GM12878 (cell line): ENCODE measurements at regions of chr3 and their contacts with region 1.

Region 1: GRCh38 chr3:153026026-153026425 is 136.0 kb upstream of the RAP2B start:
- DNase-seq: no peak
- ATAC-seq: peak; percentile 50; the same call in 1 of the 3 replicates
- H3K4me3 ChIP-seq: no peak overlapping the region
- H3K27ac ChIP-seq: no peak overlapping the region
- H3K4me1 ChIP-seq: no peaks in the 10 kb centered on the region
- H3K27me3 ChIP-seq: no peaks in the 10 kb centered on the region
- CTCF ChIP-seq: peak; percentile 34 to 63 (median 49); a peak in 5 of 6 replicates
- EP300 ChIP-seq: no peak
- POLR2A ChIP-seq: no peak
- RAD21 ChIP-seq: peak; percentile 67

Region 2: DNA sequence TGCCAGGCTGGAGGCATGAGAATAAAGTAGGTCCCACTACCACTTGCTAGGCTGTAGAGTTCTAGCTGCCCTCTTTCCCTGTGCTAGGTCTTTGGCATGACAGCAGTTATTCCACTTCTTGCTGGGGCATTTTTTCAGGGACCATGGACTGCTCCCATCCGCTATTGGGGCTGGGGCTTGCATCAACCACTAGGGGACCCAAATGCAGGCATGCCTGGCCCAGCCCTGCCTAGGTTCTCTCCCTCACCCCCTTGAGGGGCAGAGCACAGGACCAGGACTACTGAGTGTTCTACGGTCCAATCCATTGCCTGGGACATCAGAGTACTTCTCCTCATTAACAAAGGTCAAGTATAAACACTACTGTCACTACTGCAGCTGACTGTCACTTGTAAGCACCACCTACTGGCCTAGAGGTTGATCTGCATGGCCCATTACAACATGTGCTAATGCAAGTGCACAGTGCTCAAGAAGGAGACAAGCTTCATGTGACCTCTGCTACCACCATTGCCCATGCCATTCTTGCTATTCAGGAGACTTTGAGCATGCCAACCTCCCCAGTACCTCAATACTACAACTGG is 486.7 kb before region 1 on chr3:
- CTCF ChIA-PET with region 1: no interaction called
- POLR2A ChIA-PET with region 1: no interaction called
- RAD21 ChIA-PET with region 1: no interaction called
- SMC1A ChIA-PET with region 1: no interaction called
- in situ Hi-C with region 1: no loop called
- intact Hi-C with region 1: no loop called
- DNase-seq: no peak
- ATAC-seq: peak; percentile 89
- H3K4me3 ChIP-seq: no peak overlapping the region
- H3K27ac ChIP-seq: no peak overlapping the region
- H3K4me1 ChIP-seq: no peaks in the 10 kb centered on the region
- H3K27me3 ChIP-seq: no peaks in the 10 kb centered on the region
- CTCF ChIP-seq: peak in 1 of 3 experiments; percentile 27; a peak in 2 of 6 replicates
- EP300 ChIP-seq: no peak
- POLR2A ChIP-seq: no peak
- RAD21 ChIP-seq: no peak

Region 3: GRCh38 chr3:153052096-153052460 is 26.1 kb after region 1 on chr3:
- CTCF ChIA-PET with region 1: no interaction called
- POLR2A ChIA-PET with region 1: no interaction called
- RAD21 ChIA-PET with region 1: no interaction called
- SMC1A ChIA-PET with region 1: no interaction called
- in situ Hi-C with region 1: no loop called
- intact Hi-C with region 1: no loop called
- DNase-seq: no peak
- ATAC-seq: no peak
- H3K4me3 ChIP-seq: no peak overlapping the region
- H3K27ac ChIP-seq: no peak overlapping the region
- H3K4me1 ChIP-seq: no peaks in the 10 kb centered on the region
- H3K27me3 ChIP-seq: no peaks in the 10 kb centered on the region
- CTCF ChIP-seq: no peak
- EP300 ChIP-seq: no peak
- POLR2A ChIP-seq: no peak
- RAD21 ChIP-seq: no peak

Region 4: DNA sequence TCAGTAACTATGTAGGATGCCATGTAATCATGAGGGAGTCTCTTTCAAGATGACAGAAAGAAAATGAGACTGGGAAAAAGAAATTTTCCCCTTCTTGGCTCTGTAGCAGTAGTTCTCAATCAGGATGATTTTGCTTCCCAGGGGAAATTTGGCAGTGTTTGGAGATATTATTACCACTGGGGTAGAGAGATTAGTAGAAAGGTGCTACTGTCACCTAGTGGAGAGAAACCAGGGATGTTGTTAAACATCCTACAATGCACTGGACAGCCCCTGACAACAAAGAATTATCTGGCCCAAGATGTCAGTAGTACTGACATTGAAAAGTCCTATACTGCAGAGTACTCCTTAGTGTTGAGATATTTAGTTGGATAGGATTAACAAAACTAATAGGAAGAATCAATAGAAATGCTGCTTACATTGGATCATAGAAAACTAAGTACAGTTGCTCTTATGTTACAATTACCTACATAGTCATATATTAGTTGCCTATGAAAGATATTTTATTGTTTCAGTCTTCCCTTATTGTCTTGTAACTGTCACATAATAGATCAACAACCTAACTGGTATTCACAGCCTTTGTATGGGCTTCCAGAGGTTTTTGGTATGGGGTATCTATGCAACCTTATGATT is 569.3 kb after region 1 on chr3:
- CTCF ChIA-PET with region 1: no interaction called
- POLR2A ChIA-PET with region 1: no interaction called
- RAD21 ChIA-PET with region 1: no interaction called
- SMC1A ChIA-PET with region 1: interaction called, 5 read pairs
- in situ Hi-C with region 1: no loop called
- intact Hi-C with region 1: loop called (anchors 5 kb)
- DNase-seq: no peak
- ATAC-seq: peak; percentile 75
- H3K4me3 ChIP-seq: no peak overlapping the region
- H3K27ac ChIP-seq: no peak overlapping the region
- H3K4me1 ChIP-seq: no peaks in the 10 kb centered on the region
- H3K27me3 ChIP-seq: no peaks in the 10 kb centered on the region
- CTCF ChIP-seq: peak; percentile 50 to 65 (median 54)
- EP300 ChIP-seq: no peak
- POLR2A ChIP-seq: no peak
- RAD21 ChIP-seq: peak; percentile 75

Region 5: DNA sequence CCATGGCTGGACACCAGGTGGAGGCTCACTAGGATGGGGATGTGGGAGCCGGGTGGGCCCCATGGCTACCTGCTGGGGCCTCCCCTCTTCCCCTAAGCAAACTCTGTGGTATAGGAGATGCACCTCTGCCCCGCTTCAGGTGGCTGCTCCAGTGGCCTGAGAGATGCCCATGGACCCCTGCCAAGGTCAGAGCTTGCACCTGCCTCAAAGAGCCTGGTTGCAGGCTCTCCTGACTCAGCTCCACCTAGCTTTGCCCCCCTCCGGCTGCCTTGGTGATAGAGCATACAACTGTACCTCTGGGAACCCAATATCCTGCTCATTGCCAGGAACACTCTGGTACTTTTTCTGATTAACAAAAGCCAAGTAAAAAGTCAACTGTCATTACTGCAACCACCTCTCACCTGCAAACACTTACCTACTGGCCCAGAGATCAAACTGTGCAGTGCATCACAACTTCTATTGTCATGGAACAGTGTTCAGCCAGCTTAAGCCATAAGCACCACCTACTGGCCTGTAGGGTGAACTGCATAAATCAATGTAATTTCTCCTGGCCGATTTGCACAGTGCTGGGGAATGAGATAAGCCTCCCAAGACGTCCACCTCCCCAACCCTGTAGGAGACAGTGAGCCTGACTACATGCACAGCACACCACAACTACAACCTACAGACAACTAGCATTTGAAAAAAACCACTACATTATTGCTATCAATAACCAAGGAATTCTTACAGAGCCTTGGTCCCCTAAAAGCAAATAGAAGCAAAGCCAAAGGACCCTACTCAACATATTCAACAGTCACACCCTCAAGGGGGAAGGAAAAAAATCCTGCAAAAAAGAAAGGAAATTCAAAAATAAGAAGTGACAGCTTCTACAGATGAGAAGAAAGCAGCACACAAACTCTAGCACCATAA is 742.8 kb after region 1 on chr3:
- CTCF ChIA-PET with region 1: interaction called, 3 read pairs
- POLR2A ChIA-PET with region 1: no interaction called
- RAD21 ChIA-PET with region 1: interaction called, 3 read pairs
- SMC1A ChIA-PET with region 1: interaction called, 3 read pairs
- in situ Hi-C with region 1: loop called (anchors 10 kb)
- intact Hi-C with region 1: loop called (anchors 1 kb)
- DNase-seq: peak; percentile 9
- ATAC-seq: peak; percentile 98
- H3K4me3 ChIP-seq: no peak overlapping the region
- H3K27ac ChIP-seq: no peak overlapping the region
- H3K4me1 ChIP-seq: no peaks in the 10 kb centered on the region
- H3K27me3 ChIP-seq: no peaks in the 10 kb centered on the region
- CTCF ChIP-seq: peak; percentile 77 to 82 (median 79)
- EP300 ChIP-seq: no peak
- POLR2A ChIP-seq: no peak
- RAD21 ChIP-seq: peak; percentile 85

Region 6: GRCh38 chr3:154018100-154018696 is 992.2 kb after region 1 on chr3:
- CTCF ChIA-PET with region 1: interaction called, 3 read pairs
- POLR2A ChIA-PET with region 1: no interaction called
- RAD21 ChIA-PET with region 1: no interaction called
- SMC1A ChIA-PET with region 1: no interaction called
- in situ Hi-C with region 1: loop called (anchors 10 kb)
- intact Hi-C with region 1: loop called (anchors 5 kb)
- DNase-seq: peak; percentile 11
- ATAC-seq: peak; percentile 92
- H3K4me3 ChIP-seq: no peak overlapping the region
- H3K27ac ChIP-seq: no peak overlapping the region
- H3K4me1 ChIP-seq: no peaks in the 10 kb centered on the region
- H3K27me3 ChIP-seq: no peaks in the 10 kb centered on the region
- CTCF ChIP-seq: peak; percentile 65 to 68 (median 67)
- EP300 ChIP-seq: no peak
- POLR2A ChIP-seq: no peak
- RAD21 ChIP-seq: peak; percentile 50